HCT116 (cell line): ENCODE measurements at regions of chr5 and their contacts with region 1.

Region 1: DNA sequence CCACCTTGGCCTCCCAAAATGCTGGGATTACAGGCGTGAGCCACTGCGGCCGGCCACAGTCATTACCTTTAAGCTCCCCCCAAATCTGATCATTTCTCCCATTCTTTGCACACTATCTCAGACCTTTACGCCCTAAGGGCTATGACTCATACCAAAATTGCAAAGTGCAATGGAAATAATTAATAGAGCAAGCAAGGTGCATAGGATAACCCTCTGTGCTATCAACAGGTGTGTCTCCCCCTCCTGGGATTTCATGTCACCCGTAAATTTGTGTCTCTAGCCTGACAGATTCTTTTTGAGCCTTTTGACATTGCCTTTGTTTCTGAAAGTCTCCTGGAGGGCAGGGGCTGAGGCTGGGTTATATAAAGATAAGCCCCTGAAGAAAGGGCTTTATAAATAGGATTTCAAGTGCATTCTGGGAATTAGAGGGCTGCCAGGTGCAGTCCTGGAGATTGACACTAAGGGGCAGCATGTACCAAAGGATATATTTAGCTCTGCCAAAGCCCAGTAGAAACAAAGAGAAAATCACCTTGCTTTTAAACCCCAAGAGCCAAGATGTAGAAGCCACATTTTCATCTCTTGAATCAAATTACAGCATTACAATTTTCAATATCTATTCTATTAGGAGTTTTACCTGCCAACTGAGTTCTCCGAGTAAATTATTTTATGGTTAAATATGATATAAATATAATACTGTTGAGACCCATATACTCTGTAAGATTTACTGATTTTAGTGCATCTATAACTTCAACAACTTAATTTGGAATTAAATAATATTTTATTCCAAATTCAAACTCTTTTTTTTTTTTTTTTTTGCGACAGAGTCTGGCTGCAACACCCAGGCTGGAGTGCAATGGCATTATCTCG is 18.2 kb downstream of the S100Z start:
- DNase-seq: peak; percentile 63
- ATAC-seq: peak; percentile 89
- H3K4me3 ChIP-seq: no peak overlapping the region
- H3K27ac ChIP-seq: no peak overlapping the region
- H3K4me1 ChIP-seq: peaks cover 0 to 11% of the 10 kb centered on the region in 2 experiments; a peak in 3 of 4 replicates
- H3K27me3 ChIP-seq: no peaks in the 10 kb centered on the region
- CTCF ChIP-seq: peak; percentile 78 to 88 (median 82)
- POLR2A ChIP-seq: no peak
- RAD21 ChIP-seq: peak; percentile 89

Region 2: DNA sequence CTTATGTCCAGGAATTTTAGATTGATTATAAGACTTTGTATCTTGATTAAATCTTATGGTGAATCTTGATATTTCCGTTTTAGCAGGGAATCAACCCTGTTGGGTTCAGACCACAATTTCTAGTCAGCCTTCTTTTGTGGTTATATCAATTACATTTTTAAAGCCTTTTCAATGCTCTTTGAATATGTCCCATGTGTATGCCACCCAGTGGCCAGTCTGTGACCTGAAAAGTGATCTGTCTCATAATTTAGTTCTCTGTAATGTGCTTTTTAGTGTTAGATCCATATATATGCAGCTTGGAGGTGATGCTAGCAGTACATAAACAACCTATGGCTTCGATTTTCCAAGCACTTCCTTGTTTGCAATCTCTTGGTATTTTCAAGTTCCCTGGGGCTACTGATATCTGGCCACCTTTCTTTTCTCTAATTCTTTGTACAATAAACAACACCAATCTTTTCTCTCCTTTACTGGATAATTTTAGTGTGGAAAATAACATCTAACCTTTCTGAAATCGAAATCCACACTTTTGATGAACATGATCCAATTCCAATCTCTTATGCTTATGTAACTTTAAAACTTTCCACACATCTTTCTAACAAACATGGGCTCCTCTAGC is 371.2 kb after region 1 on chr5:
- CTCF ChIA-PET with region 1: no interaction called
- POLR2A ChIA-PET with region 1: no interaction called
- RAD21 ChIA-PET with region 1: no interaction called
- intact Hi-C with region 1: loop called (anchors 2 kb)
- DNase-seq: peak; percentile 18
- ATAC-seq: peak; percentile 71
- H3K4me3 ChIP-seq: no peak overlapping the region
- H3K27ac ChIP-seq: no peak overlapping the region
- H3K4me1 ChIP-seq: no peaks in the 10 kb centered on the region
- H3K27me3 ChIP-seq: no peaks in the 10 kb centered on the region
- CTCF ChIP-seq: peak; percentile 42 to 54 (median 53); a peak in 5 of 6 replicates
- POLR2A ChIP-seq: no peak
- RAD21 ChIP-seq: peak; percentile 47